GM10248 (cell line): ENCODE measurements at regions of chr3 and their contacts with region 1.

Region 1: DNA sequence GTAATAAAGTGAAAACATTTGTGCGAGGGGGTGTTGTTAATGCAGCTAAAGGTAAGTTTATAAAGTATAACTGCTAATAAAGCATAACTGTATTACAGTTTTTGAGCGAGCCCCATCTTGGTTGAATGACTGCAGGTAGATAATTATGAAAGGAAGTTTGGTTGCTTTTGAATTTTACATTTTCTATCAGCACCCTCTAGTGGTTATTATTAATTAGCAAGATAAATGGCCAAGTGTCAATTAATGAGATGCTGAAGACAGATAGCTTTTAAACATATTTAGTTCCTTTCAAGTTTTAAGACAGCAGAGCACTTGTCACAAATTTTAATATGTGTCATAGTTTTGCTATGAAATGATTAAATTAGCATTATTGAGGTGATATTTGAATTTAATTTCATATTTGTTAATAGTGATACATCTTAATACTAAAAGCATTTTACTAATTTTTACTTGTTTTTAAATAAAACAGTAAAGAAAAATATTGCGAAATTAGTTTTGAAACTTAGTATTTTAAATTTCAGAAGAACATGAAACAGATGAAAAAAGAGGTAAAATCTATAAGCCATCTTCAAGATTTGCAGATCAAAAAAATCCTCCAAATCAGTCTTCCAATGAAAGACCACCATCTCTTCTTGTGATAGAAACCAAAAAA is 15.1 kb downstream of the U2SURP start:
- DNase-seq: no peak
- CTCF ChIP-seq: peak; percentile 49

Region 2: DNA sequence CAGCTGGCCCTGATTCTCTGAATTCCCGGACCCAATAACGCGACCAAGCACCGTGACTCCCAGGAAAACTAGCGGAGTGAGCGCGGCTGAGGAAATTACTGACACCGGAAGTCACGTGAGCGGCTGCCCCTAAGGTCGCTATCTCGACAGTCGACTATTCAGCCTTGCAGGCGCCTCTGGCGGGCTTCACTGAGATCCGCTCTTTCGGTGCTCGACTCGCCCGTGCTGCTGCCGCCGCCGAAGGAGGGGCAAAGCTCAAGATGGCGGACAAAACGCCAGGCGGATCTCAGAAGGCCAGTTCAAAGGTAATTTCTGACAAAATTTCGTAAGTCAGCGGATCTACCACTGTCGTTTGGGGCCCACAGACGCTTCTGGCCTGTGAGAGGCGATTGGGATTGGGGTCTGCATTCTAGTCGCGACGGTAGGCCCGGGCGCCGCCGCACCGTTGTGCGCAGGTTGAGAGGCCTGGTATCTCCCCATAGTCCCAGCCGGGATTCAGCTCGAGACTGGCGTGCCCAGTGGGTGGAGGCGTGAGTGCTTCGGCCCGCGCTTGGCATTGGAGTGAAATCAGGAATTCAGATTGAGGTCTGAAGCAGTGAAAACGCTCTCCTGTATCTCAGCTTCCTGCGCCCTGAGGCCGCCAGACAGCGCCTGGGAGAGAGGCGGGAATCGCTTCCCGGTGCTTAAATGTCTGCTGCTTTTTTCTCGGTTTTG is 14.9 kb before region 1 on chr3 and contains the start of gene U2SURP:
- CTCF ChIA-PET with region 1: interaction called, 14 read pairs
- POLR2A ChIA-PET with region 1: interaction called, 4 read pairs
- DNase-seq: peak; percentile 96
- CTCF ChIP-seq: no peak